OCI-LY7 (cell line): ENCODE measurements at regions of chr1 and their contacts with region 1.

Region 1: DNA sequence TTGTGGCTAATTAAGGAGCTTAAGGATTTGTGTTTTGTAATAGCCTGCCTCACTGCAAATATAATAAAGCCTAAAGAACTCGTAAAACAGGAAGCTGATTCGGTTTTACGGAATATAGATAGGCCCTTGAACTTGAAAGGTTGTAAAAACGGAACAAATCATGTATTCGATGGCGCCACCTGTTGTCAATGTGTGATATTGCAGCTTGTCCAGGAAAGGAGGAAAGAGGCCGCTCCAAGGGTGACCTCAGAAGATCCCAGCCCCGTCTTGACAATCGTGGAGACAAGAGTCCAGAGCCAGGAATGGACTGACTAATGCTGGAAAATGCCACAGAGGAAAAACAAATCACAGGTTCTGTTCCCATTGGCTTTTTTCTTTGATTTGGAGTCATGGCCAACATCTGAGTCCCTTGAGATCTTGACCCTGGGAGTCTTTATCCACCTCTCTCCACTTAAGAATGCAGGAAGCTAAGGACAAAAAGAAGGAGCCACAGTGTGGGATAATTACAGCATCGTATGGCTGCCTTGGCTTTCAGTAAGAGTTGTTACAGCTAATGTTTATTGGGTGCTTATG is 7.0 kb upstream of the IGSF21 start:
- DNase-seq: peak; percentile 58
- H3K4me3 ChIP-seq: no peak overlapping the region
- H3K27ac ChIP-seq: no peak overlapping the region
- H3K4me1 ChIP-seq: no peaks in the 10 kb centered on the region
- CTCF ChIP-seq: peak; percentile 92

Region 2: DNA sequence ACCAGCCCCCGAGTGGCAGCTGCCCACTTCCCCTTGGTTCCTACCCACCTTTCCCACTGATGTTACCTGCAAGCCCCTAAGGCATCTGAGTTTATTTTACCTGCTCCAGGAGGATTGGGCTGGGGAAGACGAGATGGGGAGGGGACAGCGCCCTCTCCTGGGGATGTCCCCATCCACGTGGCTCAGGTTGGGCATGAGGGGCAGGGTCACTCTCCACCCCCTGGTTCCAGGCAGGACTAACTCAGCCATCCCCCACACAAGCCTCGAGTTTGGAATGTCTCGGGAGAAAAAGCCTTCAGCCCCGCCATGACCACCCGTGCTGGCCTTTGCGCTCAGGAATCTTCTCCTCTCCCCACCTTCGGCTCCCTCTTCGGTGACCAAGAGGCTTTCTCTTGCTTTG is 471.1 kb before region 1 on chr1:
- CTCF ChIA-PET with region 1: no interaction called
- POLR2A ChIA-PET with region 1: no interaction called
- intact Hi-C with region 1: no loop called
- DNase-seq: no peak
- H3K4me3 ChIP-seq: no peak overlapping the region
- H3K27ac ChIP-seq: no peak overlapping the region
- H3K4me1 ChIP-seq: no peaks in the 10 kb centered on the region
- CTCF ChIP-seq: peak; percentile 62

Region 3: DNA sequence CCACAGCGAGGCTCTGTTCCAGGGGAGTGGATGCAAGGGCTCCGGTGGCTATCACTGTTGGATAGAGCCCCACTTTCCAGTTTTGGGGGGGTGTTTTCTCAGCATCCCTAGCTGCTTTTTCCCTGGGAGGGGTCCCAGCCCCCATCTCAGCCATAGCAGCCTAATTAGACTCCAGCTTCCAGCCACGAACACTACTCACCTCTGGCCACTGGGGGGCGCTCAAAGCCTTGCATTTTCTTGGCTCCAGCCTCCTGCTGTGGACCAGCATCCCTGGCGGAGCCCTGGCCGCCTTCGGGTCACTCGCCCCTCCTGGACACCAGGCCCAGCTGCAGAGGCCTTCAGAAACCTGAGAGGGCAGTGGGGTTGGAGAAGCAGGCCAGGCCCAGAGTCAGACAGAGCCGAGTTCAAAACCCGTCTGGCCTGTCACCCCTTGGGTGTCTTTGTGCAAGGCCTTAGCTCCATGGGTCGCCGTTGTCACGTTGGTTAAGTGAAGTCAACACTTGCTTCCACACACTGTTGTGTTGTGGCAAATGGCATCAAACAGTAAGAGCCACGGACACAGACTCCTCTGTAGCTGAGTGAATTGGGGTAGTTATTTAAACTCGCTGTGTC is 438.9 kb before region 1 on chr1:
- CTCF ChIA-PET with region 1: no interaction called
- POLR2A ChIA-PET with region 1: no interaction called
- intact Hi-C with region 1: loop called (anchors 2 kb)
- DNase-seq: peak; percentile 55
- H3K4me3 ChIP-seq: no peak overlapping the region
- H3K27ac ChIP-seq: no peak overlapping the region
- H3K4me1 ChIP-seq: no peaks in the 10 kb centered on the region
- CTCF ChIP-seq: peak; percentile 95

Region 4: DNA sequence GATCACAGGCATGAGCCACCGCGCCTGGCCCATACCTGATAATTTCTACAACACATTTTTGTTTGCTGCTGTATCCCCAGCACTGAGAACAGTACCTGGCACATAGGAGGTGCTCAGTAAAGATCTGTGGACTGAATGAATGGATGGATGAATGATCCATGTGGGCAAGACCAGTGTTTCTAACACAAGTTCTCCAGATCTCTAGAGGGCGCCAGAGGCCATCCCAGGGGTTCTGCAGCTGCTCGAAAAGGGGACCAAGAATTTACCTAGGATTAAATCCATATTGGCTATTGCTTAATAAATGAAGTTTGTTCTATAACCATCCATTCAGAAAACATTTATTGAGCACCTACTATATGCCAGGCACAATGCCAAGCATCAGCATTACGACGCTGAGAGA is 177.7 kb before region 1 on chr1:
- CTCF ChIA-PET with region 1: no interaction called
- POLR2A ChIA-PET with region 1: interaction called, 3 read pairs
- intact Hi-C with region 1: loop called (anchors 1 kb)
- DNase-seq: peak; percentile 61
- H3K4me3 ChIP-seq: no peak overlapping the region
- H3K27ac ChIP-seq: no peak overlapping the region
- H3K4me1 ChIP-seq: no peaks in the 10 kb centered on the region
- CTCF ChIP-seq: peak; percentile 85

Region 5: DNA sequence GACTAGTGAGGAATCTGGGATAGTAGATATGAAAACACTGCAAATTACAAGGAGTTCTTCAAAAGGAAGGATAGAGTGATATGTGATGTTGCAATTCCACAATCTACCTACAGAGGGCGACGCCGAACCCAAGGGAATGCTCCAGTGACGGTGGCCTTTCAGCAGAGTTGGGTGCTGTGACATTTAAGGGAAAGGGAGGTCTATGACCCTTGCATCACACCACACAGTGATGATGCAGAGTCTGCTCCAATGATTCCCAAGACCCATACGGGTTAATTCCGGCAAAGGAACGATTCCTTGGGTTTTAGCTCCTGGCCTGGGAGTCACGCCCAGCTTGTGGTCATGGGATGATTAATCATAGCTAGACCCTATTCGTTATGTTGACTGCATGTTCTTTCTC is 116.0 kb before region 1 on chr1:
- CTCF ChIA-PET with region 1: interaction called, 5 read pairs
- POLR2A ChIA-PET with region 1: no interaction called
- intact Hi-C with region 1: loop called (anchors 2 kb)
- DNase-seq: peak; percentile 54
- H3K4me3 ChIP-seq: no peak overlapping the region
- H3K27ac ChIP-seq: no peak overlapping the region
- H3K4me1 ChIP-seq: no peaks in the 10 kb centered on the region
- CTCF ChIP-seq: peak; percentile 91

Region 6: DNA sequence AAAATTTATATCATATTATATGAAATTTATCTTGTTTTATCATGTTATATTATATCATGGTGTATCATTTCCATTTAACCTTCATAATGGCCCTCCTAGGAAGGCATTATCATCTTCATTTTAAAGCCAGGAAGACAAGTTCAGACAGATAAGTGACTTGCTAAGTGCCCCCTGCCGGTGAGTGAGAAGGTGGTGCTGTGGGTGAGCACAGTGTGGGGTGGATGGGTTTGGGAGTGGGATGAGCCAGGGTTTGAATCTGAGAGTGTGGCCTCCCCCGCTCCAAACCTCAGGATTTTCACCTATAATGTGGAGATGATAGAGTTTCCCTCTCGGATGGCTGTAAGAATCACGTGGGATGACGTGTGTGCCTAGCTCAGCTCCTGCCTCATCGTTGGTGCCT is 101.7 kb before region 1 on chr1:
- CTCF ChIA-PET with region 1: no interaction called
- POLR2A ChIA-PET with region 1: no interaction called
- intact Hi-C with region 1: loop called (anchors 5 kb)
- DNase-seq: no peak
- H3K4me3 ChIP-seq: no peak overlapping the region
- H3K27ac ChIP-seq: no peak overlapping the region
- H3K4me1 ChIP-seq: peaks cover 7% of the 10 kb centered on the region
- CTCF ChIP-seq: no peak

Region 7: GRCh38 chr1:18299441-18300338 is 199.1 kb after region 1 on chr1:
- CTCF ChIA-PET with region 1: no interaction called
- POLR2A ChIA-PET with region 1: no interaction called
- intact Hi-C with region 1: loop called (anchors 10 kb)
- DNase-seq: peak; percentile 65
- H3K4me3 ChIP-seq: no peak overlapping the region
- H3K27ac ChIP-seq: no peak overlapping the region
- H3K4me1 ChIP-seq: no peaks in the 10 kb centered on the region
- CTCF ChIP-seq: peak; percentile 92